Activated CD8-positive, alpha-beta T cell treated with anti-CD3 and anti-CD28 coated beads for 36 hours (primary cell): ENCODE measurements at regions of chr19 and their contacts with region 1.

Region 1: GRCh38 chr19:44954824-44955586 is at the start of gene CLPTM1:
- DNase-seq: peak; percentile 97
- ATAC-seq: peak; percentile 94
- H3K4me3 Mint-ChIP-seq: peak within 1 kb of the TSS; percentile 94
- H3K27ac Mint-ChIP-seq: peak within 1 kb of the TSS; percentile 100
- H3K4me1 Mint-ChIP-seq: peaks cover 43% of the 10 kb centered on the region
- H3K27me3 Mint-ChIP-seq: no peaks in the 10 kb centered on the region
- CTCF ChIP-seq: no peak
- total RNA-seq, gene CLPTM1: 38.6 to 39.8 TPM

Region 2: GRCh38 chr19:44626048-44626624 is 328.9 kb before region 1 on chr19:
- CTCF ChIA-PET with region 1: no interaction called
- POLR2A ChIA-PET with region 1: no interaction called
- intact Hi-C with region 1: no loop called
- DNase-seq: no peak
- ATAC-seq: no peak
- H3K4me3 Mint-ChIP-seq: no peak overlapping the region
- H3K27ac Mint-ChIP-seq: no peak overlapping the region
- H3K4me1 Mint-ChIP-seq: no peaks in the 10 kb centered on the region
- H3K27me3 Mint-ChIP-seq: peaks cover 6% of the 10 kb centered on the region
- CTCF ChIP-seq: no peak

Region 3: GRCh38 chr19:44800461-44800860 is 154.5 kb before region 1 on chr19:
- CTCF ChIA-PET with region 1: no interaction called
- POLR2A ChIA-PET with region 1: no interaction called
- intact Hi-C with region 1: no loop called
- DNase-seq: peak; percentile 91
- ATAC-seq: peak; percentile 99
- H3K4me3 Mint-ChIP-seq: no peak overlapping the region
- H3K27ac Mint-ChIP-seq: no peak overlapping the region
- H3K4me1 Mint-ChIP-seq: peaks cover 9% of the 10 kb centered on the region
- H3K27me3 Mint-ChIP-seq: no peaks in the 10 kb centered on the region
- CTCF ChIP-seq: peak; percentile 79

Region 4: DNA sequence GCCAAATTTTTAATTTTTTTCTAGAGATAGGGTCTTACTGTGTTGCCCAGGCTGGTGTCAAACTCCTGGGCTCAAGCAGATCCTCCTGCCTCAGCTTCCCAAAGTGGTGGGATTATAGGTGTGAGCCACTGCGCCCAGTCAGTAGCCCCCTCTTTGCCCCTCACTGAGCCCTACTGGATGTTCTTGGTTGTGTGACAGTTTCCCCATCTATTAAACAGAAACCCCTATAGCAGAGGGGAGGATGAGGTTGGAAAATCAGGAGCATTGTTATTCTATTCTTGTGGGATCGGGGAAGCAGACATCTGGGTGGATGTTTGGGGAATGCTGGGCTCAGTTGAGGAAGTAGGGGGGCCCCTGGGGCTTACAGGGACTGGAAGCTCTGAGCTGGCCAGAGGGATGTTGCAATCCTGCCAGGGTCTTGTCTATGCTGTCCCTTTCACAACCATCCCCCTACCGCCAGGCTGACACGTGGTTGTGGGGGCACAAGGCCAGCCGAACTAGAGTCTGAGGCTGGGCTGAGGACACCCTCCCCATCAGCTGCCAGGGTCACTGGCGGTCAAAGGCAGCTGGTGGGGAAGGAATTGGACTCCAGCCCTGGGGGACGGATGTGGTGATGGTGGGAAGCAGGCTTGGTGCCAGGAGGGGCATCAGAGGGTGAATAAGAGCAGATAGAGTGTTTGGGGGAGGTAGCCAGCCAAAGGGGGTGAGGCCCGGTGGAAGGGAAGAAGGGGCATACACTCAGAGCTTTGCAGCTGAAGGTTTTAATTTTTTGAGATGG is 29.7 kb before region 1 on chr19:
- CTCF ChIA-PET with region 1: no interaction called
- POLR2A ChIA-PET with region 1: no interaction called
- intact Hi-C with region 1: no loop called
- DNase-seq: no peak
- ATAC-seq: no peak
- H3K4me3 Mint-ChIP-seq: no peak overlapping the region
- H3K27ac Mint-ChIP-seq: no peak overlapping the region
- H3K4me1 Mint-ChIP-seq: no peaks in the 10 kb centered on the region
- H3K27me3 Mint-ChIP-seq: peaks cover 15% of the 10 kb centered on the region
- CTCF ChIP-seq: no peak

Region 5: GRCh38 chr19:44939668-44940067 is 15.3 kb before region 1 on chr19:
- CTCF ChIA-PET with region 1: interaction called, 12 read pairs
- POLR2A ChIA-PET with region 1: no interaction called
- intact Hi-C with region 1: no loop called
- DNase-seq: no peak
- ATAC-seq: no peak
- H3K4me3 Mint-ChIP-seq: no peak overlapping the region
- H3K27ac Mint-ChIP-seq: no peak overlapping the region
- H3K4me1 Mint-ChIP-seq: no peaks in the 10 kb centered on the region
- H3K27me3 Mint-ChIP-seq: no peaks in the 10 kb centered on the region
- CTCF ChIP-seq: no peak

Region 6: GRCh38 chr19:45022010-45022409 is 67.0 kb after region 1 on chr19:
- CTCF ChIA-PET with region 1: no interaction called
- POLR2A ChIA-PET with region 1: no interaction called
- intact Hi-C with region 1: no loop called
- DNase-seq: no peak
- ATAC-seq: no peak
- H3K4me3 Mint-ChIP-seq: no peak overlapping the region
- H3K27ac Mint-ChIP-seq: no peak overlapping the region
- H3K4me1 Mint-ChIP-seq: peaks cover 1% of the 10 kb centered on the region
- H3K27me3 Mint-ChIP-seq: no peaks in the 10 kb centered on the region
- CTCF ChIP-seq: no peak